ENCODE measurements at regions of chr11 and their contacts with region 1.

Region 1: DNA sequence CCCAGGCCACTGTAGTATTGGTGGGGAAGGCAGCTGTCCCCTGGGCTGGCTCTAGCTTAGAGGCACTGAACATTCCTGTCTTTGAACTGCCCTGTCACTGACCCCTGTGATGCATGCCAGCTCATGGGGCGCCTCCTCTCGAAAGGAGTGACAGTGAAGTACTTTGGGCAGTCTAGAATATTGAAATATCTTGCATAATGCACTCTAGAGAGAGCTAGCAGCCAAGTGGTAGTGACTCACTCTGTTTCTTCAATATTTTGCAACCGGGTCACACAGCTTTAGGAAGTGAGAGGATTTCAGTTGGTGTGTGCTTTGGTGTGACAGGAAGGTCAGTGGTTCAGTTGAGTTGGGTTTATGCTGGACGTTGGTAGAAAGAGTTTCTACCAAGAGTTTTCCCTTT is 35.5 kb upstream of the ST14 start:
- H3K4me3 Mint-ChIP-seq: peak overlapping the region; percentile 23
- H3K27ac Mint-ChIP-seq: peak overlapping the region; percentile 81
- H3K4me1 Mint-ChIP-seq: peaks cover 69% of the 10 kb centered on the region
- H3K27me3 Mint-ChIP-seq: peaks cover 2% of the 10 kb centered on the region

Region 2: DNA sequence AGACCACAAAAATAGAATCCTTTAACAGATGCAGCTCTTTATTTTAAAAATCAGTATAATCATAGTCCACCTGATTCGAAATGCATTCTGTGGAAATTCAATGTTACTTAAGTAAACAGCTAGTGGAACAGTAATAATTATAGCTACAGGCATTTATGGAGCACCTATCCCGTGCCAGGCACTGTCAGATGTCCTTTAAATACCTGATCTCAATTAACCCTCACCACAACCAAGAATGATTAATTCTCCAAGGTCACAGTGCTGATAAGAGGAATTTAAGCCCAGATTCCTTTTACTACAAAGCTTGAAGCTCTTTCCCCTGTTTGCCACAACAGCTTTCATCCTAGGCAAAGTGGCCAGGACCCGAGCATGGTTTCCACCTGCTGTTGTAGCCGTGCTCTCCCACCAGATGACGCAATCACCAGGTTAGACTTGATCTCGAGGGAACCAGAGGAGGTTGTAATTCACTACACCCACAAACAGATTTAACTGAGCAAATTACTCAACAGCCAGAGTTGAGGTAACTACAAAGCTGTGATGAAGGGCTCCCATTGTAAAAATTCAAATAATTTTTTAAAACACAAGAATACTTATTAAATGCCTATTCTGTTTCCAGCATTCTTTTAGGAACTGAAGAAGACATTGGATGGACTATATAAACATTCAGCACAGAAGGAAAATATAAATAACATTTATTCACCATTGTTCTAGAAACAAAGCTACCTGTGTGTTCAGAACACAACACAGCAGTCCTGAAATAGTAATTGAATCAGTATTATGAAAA is 131.7 kb before region 1 on chr11:
- intact Hi-C with region 1: no loop called
- H3K4me3 Mint-ChIP-seq: no peak overlapping the region
- H3K27ac Mint-ChIP-seq: no peak overlapping the region
- H3K4me1 Mint-ChIP-seq: peaks cover 6% of the 10 kb centered on the region
- H3K27me3 Mint-ChIP-seq: no peaks in the 10 kb centered on the region

Region 3: GRCh38 chr11:130002846-130003716 is 121.0 kb before region 1 on chr11:
- intact Hi-C with region 1: loop called (anchors 1 kb)
- H3K4me3 Mint-ChIP-seq: peak overlapping the region; percentile 95
- H3K27ac Mint-ChIP-seq: peak overlapping the region; percentile 100
- H3K4me1 Mint-ChIP-seq: peaks cover 40% of the 10 kb centered on the region
- H3K27me3 Mint-ChIP-seq: no peaks in the 10 kb centered on the region

Region 4: GRCh38 chr11:130069684-130070108 is 54.4 kb before region 1 on chr11 and contains the start of gene APLP2:
- intact Hi-C with region 1: loop called (anchors 5 kb)
- H3K4me3 Mint-ChIP-seq: peak within 1 kb of the TSS; percentile 82
- H3K27ac Mint-ChIP-seq: peak within 1 kb of the TSS; percentile 95
- H3K4me1 Mint-ChIP-seq: peaks cover 43% of the 10 kb centered on the region
- H3K27me3 Mint-ChIP-seq: no peaks in the 10 kb centered on the region

Region 5: GRCh38 chr11:130094614-130095013 is 29.5 kb before region 1 on chr11:
- intact Hi-C with region 1: loop called (anchors 2 kb)
- H3K4me3 Mint-ChIP-seq: peak overlapping the region; percentile 4
- H3K27ac Mint-ChIP-seq: peak overlapping the region; percentile 70
- H3K4me1 Mint-ChIP-seq: peaks cover 61% of the 10 kb centered on the region
- H3K27me3 Mint-ChIP-seq: no peaks in the 10 kb centered on the region